Naive thymus-derived CD4-positive, alpha-beta T cell (primary cell): ENCODE measurements at regions of chr4 and their contacts with region 1.

Region 1: GRCh38 chr4:88320780-88321373 is 36.5 kb upstream of the PPM1K start:
- DNase-seq: peak in 7 of 9 donors; percentile 9 to 39 (median 25)
- ATAC-seq: peak; percentile 91
- H3K4me3 ChIP-seq: peak overlapping the region; percentile 18
- H3K4me3 Mint-ChIP-seq: peak overlapping the region; percentile 69 to 90 (median 82)
- H3K27ac ChIP-seq: peak overlapping the region; percentile 63
- H3K27ac Mint-ChIP-seq: peak overlapping the region; percentile 88 to 98 (median 93)
- H3K4me1 ChIP-seq: peaks cover 7 to 13% of the 10 kb centered on the region in 2 donors
- H3K4me1 Mint-ChIP-seq: peaks cover 14 to 30% (median 23%) of the 10 kb centered on the region in 7 donors
- H3K27me3 ChIP-seq: no peaks in the 10 kb centered on the region
- H3K27me3 Mint-ChIP-seq: no peaks in the 10 kb centered on the region

Region 2: DNA sequence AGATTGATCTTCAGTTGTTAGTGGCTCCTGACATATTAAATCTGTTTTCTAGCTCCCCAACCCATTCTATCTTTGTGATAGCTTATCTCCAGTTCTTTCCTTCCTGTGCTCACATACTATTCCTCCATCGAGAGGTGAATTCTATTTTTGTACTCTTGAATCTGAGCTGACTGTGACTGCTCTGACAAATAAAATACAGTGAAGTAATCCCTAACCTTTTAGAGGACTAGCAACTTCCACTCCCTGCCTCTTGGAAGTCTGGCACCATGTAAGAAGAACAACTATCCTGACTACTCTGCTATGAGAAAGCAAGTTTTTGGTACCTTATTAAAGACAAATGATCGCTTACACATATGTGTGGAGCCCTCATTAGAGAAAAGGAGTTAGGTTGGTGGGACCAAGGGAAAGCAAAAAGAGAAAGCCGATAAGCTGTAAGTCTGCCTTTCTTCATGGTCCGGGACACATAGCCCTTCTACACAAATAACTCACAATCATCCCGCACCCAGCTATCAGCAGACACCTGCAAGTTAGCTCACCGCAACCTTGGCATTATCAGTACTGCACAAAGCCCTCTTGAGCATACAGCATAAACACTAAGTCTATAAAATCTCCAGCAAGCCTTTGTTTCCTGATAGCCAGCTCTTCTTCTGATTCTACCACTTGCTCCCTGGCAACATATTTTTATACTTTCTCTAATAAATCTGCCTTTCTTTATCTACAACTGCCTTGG is 23.0 kb before region 1 on chr4:
- CTCF ChIA-PET with region 1: no interaction called
- POLR2A ChIA-PET with region 1: interaction called, 3 read pairs
- intact Hi-C with region 1: loop called in 1 of 2 experiments (anchors 2 kb)
- DNase-seq: no peak
- ATAC-seq: no peak
- H3K4me3 ChIP-seq: no peak overlapping the region
- H3K4me3 Mint-ChIP-seq: no peak overlapping the region
- H3K27ac ChIP-seq: no peak overlapping the region
- H3K27ac Mint-ChIP-seq: no peak overlapping the region
- H3K4me1 ChIP-seq: no peaks in the 10 kb centered on the region
- H3K4me1 Mint-ChIP-seq: no peaks in the 10 kb centered on the region
- H3K27me3 ChIP-seq: no peaks in the 10 kb centered on the region
- H3K27me3 Mint-ChIP-seq: no peaks in the 10 kb centered on the region